Dorsolateral prefrontal cortex (tissue), 120 donors: ENCODE measurements at regions of chr4 and their contacts with region 1.

Region 1: GRCh38 chr4:37244583-37245390 is at the start of gene NWD2:
- DNase-seq: peak in 4 of 10 donors; percentile 17 to 58 (median 38)
- H3K4me3 ChIP-seq: peak within 1 kb of the TSS; percentile 17 to 72 (median 57)
- H3K27ac ChIP-seq: peak within 1 kb of the TSS in 53 of 59 donors; percentile 9 to 88 (median 71)
- H3K27me3 ChIP-seq: peaks cover 0 to 49% (median 30%) of the 10 kb centered on the region in 45 donors
- CTCF ChIP-seq: peak in 2 of 56 donors; percentile 7 to 9
- total RNA-seq, gene NWD2: 2.5 to 17.7 (median 9.6) TPM

Region 2: GRCh38 chr4:37383579-37384229 is 138.9 kb after region 1 on chr4:
- intact Hi-C with region 1: loop called (anchors 5 to 10 kb)
- DNase-seq: peak in 1 of 10 donors; percentile 18
- H3K4me3 ChIP-seq: no peak overlapping the region
- H3K27ac ChIP-seq: no peak overlapping the region
- H3K27me3 ChIP-seq: no peaks in the 10 kb centered on the region
- CTCF ChIP-seq: peak; percentile 54 to 92 (median 80)

Region 3: DNA sequence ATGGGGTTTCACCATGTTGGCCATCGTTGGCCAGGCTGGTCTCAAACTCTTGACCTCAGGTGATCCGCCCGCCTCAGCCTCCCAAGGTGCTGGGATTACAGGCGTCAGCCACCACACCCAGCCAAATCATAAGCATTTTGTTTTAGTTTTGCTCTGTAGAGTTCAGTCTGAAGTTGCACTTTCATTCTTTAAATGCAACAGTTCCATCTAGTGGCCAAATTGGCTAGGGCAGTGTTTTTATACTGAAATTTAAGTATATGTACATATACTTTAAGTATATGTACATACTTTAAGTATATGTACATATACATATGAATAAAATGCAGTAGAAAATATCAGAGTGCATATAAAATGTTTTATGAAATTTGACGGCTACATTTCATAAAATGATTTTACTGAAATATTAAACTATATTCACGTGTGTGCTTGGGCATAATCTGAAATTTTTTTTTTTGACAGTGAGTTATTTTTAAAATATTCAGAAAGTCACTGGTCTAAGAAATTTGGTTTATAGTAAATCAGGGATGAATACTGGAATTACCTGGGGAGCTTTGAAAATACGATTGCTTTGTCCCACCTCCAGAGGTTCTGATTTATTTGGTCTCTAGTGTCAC is 145.3 kb after region 1 on chr4:
- intact Hi-C with region 1: loop called in 1 of 2 experiments (anchors 10 kb)
- DNase-seq: no peak
- H3K4me3 ChIP-seq: peak overlapping the region in 22 of 59 donors; percentile 3 to 47 (median 23)
- H3K27ac ChIP-seq: no peak overlapping the region
- H3K27me3 ChIP-seq: no peaks in the 10 kb centered on the region
- CTCF ChIP-seq: peak; percentile 70 to 98 (median 83)

Region 4: GRCh38 chr4:37452952-37453280 is 208.1 kb after region 1 on chr4:
- intact Hi-C with region 1: no loop called
- DNase-seq: peak in 5 of 10 donors; percentile 43 to 73 (median 57)
- H3K4me3 ChIP-seq: peak overlapping the region; percentile 45 to 82 (median 70)
- H3K27ac ChIP-seq: peak overlapping the region in 21 of 59 donors; percentile 7 to 80 (median 48)
- H3K27me3 ChIP-seq: no peaks in the 10 kb centered on the region
- CTCF ChIP-seq: peak; percentile 41 to 80 (median 66)

Region 5: GRCh38 chr4:37675587-37676290 is 431.0 kb after region 1 on chr4:
- intact Hi-C with region 1: no loop called
- DNase-seq: no peak
- H3K4me3 ChIP-seq: no peak overlapping the region
- H3K27ac ChIP-seq: no peak overlapping the region
- H3K27me3 ChIP-seq: no peaks in the 10 kb centered on the region
- CTCF ChIP-seq: no peak

Region 6: GRCh38 chr4:37779896-37780295 is 535.1 kb after region 1 on chr4:
- intact Hi-C with region 1: no loop called
- DNase-seq: no peak
- H3K4me3 ChIP-seq: no peak overlapping the region
- H3K27ac ChIP-seq: no peak overlapping the region
- H3K27me3 ChIP-seq: no peaks in the 10 kb centered on the region
- CTCF ChIP-seq: no peak